HepG2 (cell line): ENCODE measurements at regions of chr18 and their contacts with region 1.

Region 1: DNA sequence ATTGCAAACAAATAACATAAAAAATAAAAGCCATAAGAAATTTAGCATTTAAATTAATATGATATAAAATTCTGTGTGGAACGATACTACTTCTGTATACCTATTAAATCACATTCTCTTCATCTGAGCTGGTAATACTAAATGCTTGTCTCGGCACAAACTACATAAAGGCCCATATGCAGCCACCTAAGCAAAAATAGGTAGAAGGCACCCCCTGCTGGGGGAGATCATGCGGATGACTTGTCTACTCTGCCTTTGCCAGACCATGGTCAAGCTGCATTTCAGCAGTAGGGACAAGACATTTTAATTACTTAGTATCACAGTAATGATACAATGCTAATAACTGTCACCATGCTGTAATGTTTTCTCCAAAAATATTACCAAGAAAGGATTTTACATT is 108.0 kb downstream of the CDH19 start:
- DNase-seq: peak; percentile 62
- ATAC-seq: peak; percentile 98
- H3K4me3 ChIP-seq: no peak overlapping the region
- H3K27ac ChIP-seq: no peak overlapping the region
- H3K4me1 ChIP-seq: no peaks in the 10 kb centered on the region
- H3K27me3 ChIP-seq: no peaks in the 10 kb centered on the region
- CTCF ChIP-seq: peak; percentile 78
- EP300 ChIP-seq: no peak
- POLR2A ChIP-seq: no peak
- RAD21 ChIP-seq: peak; percentile 52; the same call in 1 of the 2 replicates

Region 2: DNA sequence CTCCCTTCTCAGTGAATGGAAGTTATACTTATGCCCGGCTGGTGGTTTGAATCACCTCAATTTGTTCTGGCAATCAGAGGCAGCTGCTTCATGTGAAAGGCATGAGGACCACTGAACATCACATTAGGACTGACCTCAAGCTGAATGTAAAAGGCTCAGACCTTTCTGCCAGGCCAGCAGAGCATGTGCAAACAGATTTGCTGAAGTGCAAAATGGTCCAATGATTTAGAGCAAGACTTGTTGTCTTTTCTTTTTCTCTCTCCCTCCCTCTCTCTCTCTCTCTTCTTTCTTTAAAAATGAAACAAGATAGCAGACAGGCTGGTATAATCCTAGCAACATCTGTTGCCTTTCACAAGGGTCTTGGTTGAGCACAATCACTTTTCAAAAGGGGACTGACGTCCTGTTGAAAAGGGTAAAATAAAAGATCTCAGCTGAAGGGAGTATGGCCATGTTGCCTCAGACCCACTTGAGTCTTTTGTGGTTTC is 758.3 kb before region 1 on chr18:
- CTCF ChIA-PET with region 1: no interaction called
- POLR2A ChIA-PET with region 1: no interaction called
- in situ Hi-C with region 1: loop called (anchors 10 kb)
- intact Hi-C with region 1: no loop called
- DNase-seq: no peak
- ATAC-seq: no peak
- H3K4me3 ChIP-seq: no peak overlapping the region
- H3K27ac ChIP-seq: no peak overlapping the region
- H3K4me1 ChIP-seq: no peaks in the 10 kb centered on the region
- H3K27me3 ChIP-seq: no peaks in the 10 kb centered on the region
- CTCF ChIP-seq: no peak
- EP300 ChIP-seq: no peak
- POLR2A ChIP-seq: no peak
- RAD21 ChIP-seq: no peak

Region 3: DNA sequence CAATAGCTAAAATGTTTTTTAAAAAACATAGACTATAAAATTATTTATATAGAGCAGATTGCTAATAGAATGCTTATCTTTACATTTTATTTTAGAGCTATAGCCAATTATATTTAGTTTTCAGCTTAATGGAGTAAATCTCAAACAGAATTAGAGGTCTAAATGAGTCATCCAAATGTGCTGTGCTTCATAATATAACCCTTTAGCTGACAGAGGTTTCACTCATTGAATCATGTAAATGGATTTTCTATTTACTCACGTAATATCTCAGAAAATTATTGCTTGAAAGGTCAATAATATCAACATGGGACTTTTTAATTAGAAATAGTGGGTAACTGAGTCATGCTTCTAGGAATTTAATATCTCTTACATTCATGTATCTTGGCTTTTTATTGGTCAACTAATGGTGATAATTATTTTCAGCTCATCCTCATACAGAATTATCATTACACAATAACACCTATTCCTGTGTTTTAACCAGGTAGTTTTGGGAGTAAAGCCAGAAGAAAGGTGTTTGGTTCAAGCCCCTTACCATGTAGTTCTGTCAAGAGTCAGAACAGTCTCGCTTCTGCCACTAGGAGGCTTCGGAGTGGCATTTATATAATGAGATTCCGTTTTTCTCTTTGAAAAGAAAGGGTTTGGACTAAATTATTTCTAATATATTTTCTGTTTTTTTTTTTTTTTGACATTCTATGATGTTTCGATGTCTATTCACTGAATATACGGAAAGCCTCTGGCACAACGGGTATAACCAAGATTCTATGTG is 527.4 kb before region 1 on chr18:
- CTCF ChIA-PET with region 1: interaction called, 5 read pairs
- POLR2A ChIA-PET with region 1: no interaction called
- in situ Hi-C with region 1: loop called (anchors 25 kb)
- intact Hi-C with region 1: loop called (anchors 2 kb)
- DNase-seq: no peak
- ATAC-seq: peak; percentile 41; the same call in 1 of the 3 replicates
- H3K4me3 ChIP-seq: no peak overlapping the region
- H3K27ac ChIP-seq: no peak overlapping the region
- H3K4me1 ChIP-seq: no peaks in the 10 kb centered on the region
- H3K27me3 ChIP-seq: no peaks in the 10 kb centered on the region
- CTCF ChIP-seq: no peak
- EP300 ChIP-seq: no peak
- POLR2A ChIP-seq: no peak
- RAD21 ChIP-seq: no peak

Region 4: GRCh38 chr18:66124394-66124793 is 371.4 kb before region 1 on chr18:
- CTCF ChIA-PET with region 1: no interaction called
- POLR2A ChIA-PET with region 1: no interaction called
- in situ Hi-C with region 1: no loop called
- intact Hi-C with region 1: loop called (anchors 1 kb)
- DNase-seq: peak; percentile 1
- ATAC-seq: 0 out of 3 replicates have a peak, but pooled peaks have one; percentile 38
- H3K4me3 ChIP-seq: no peak overlapping the region
- H3K27ac ChIP-seq: no peak overlapping the region
- H3K4me1 ChIP-seq: no peaks in the 10 kb centered on the region
- H3K27me3 ChIP-seq: no peaks in the 10 kb centered on the region
- CTCF ChIP-seq: no peak
- EP300 ChIP-seq: no peak
- POLR2A ChIP-seq: no peak
- RAD21 ChIP-seq: no peak

Region 5: DNA sequence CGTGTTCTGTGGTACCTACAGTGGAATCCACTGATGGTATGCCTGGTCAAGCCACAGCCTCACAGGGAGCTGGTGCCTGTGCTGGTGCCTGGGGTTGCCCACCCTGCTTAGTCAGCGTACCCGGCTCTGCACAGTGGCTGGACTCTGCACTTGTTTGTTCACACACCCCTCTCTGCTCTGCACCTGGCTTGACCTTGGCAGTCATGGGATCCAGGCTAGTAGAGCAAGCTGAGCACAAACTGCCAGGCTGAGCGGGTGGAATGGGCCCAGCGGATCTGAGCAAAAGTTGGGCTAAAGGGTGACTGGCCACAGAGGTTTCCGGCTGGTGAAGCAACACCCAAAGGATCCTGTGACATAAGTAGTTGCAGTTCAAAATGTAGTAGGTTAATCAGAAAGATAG is 55.4 kb before region 1 on chr18:
- CTCF ChIA-PET with region 1: no interaction called
- POLR2A ChIA-PET with region 1: no interaction called
- in situ Hi-C with region 1: no loop called
- intact Hi-C with region 1: loop called (anchors 5 kb)
- DNase-seq: peak; percentile 88
- ATAC-seq: peak; percentile 100
- H3K4me3 ChIP-seq: peak overlapping the region in 1 of 3 experiments; percentile 3; a peak in 1 of 6 replicates
- H3K27ac ChIP-seq: peak overlapping the region; percentile 16
- H3K4me1 ChIP-seq: peaks cover 17% of the 10 kb centered on the region
- H3K27me3 ChIP-seq: no peaks in the 10 kb centered on the region
- CTCF ChIP-seq: no peak
- EP300 ChIP-seq: peak in 1 of 2 experiments; percentile 37; a peak in 1 of 4 replicates
- POLR2A ChIP-seq: no peak
- RAD21 ChIP-seq: no peak